Natural killer cell (primary cell): ENCODE measurements at regions of chr14 and their contacts with region 1.

Region 1: GRCh38 chr14:101843665-101844064 is 82.2 kb downstream of the PPP2R5C start:
- DNase-seq: peak; percentile 40 to 86
- ATAC-seq: peak; percentile 70 to 78 (median 76)
- H3K4me3 ChIP-seq: no peak overlapping the region
- H3K4me3 Mint-ChIP-seq: peak overlapping the region; percentile 68
- H3K27ac ChIP-seq: peak overlapping the region; percentile 54
- H3K27ac Mint-ChIP-seq: peak overlapping the region; percentile 70 to 97
- H3K4me1 ChIP-seq: peaks cover 65% of the 10 kb centered on the region
- H3K4me1 Mint-ChIP-seq: peaks cover 84 to 85% of the 10 kb centered on the region in 2 donors
- H3K27me3 ChIP-seq: no peaks in the 10 kb centered on the region
- H3K27me3 Mint-ChIP-seq: no peaks in the 10 kb centered on the region
- CTCF ChIP-seq: peak; percentile 59

Region 2: DNA sequence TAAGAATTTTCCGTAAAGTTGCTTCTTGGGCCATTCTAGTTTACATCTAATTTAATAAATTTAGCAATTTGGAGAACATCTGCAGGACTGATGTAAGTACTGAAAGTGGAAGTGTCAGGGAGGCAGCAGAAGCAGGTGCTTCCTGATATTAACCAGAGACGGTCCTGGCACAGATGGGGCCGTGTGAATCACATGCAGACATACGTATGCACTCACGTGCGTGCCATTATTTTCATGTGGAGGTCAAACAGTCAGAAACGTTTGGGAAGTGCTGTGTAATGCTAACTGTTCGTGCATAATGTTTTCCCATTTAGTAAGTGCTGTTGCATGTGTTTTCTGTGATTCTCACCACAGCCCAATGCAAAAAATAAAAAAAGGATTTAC is 32.9 kb after region 1 on chr14:
- intact Hi-C with region 1: loop called (anchors 5 kb)
- DNase-seq: peak; percentile 58 to 91
- ATAC-seq: peak; percentile 59 to 84 (median 74)
- H3K4me3 ChIP-seq: no peak overlapping the region
- H3K4me3 Mint-ChIP-seq: peak overlapping the region; percentile 76
- H3K27ac ChIP-seq: peak overlapping the region; percentile 86
- H3K27ac Mint-ChIP-seq: peak overlapping the region; percentile 93 to 94
- H3K4me1 ChIP-seq: peaks cover 62% of the 10 kb centered on the region
- H3K4me1 Mint-ChIP-seq: peaks cover 81 to 89% of the 10 kb centered on the region in 2 donors
- H3K27me3 ChIP-seq: no peaks in the 10 kb centered on the region
- H3K27me3 Mint-ChIP-seq: no peaks in the 10 kb centered on the region
- CTCF ChIP-seq: no peak